ENCODE measurements at regions of chr1 and their contacts with region 1.

Region 1: GRCh38 chr1:161749509-161750407 is at the start of gene DUSP12:
- DNase-seq: peak; percentile 98
- H3K4me3 ChIP-seq: peak within 1 kb of the TSS; percentile 92
- H3K27ac ChIP-seq: peak within 1 kb of the TSS; percentile 75
- H3K4me1 ChIP-seq: peaks cover 28% of the 10 kb centered on the region
- CTCF ChIP-seq: peak; percentile 74
- total RNA-seq, gene DUSP12: 43.9 and 71.5 TPM in 2 replicates

Region 2: GRCh38 chr1:161766102-161766981 is 16.6 kb after region 1 on chr1 and contains the start of gene ATF6:
- CTCF ChIA-PET with region 1: interaction called, 4 read pairs
- POLR2A ChIA-PET with region 1: interaction called, 3 read pairs
- intact Hi-C with region 1: loop called (anchors 1 kb)
- DNase-seq: peak; percentile 85
- H3K4me3 ChIP-seq: peak within 1 kb of the TSS; percentile 92
- H3K27ac ChIP-seq: peak within 1 kb of the TSS; percentile 39
- H3K4me1 ChIP-seq: peaks cover 19% of the 10 kb centered on the region
- CTCF ChIP-seq: 0 out of 2 replicates have a peak, but pooled peaks have one; percentile 4
- total RNA-seq, gene ATF6: 8.5 and 10.2 TPM in 2 replicates

Measured in OCI-LY7 (cell line).